ENCODE measurements at regions of chr7 and their contacts with region 1.

Region 1: GRCh38 chr7:25894902-25895791 is 256.9 kb upstream of the NFE2L3 start:
- DNase-seq: peak; percentile 89
- ATAC-seq: peak; percentile 83
- H3K4me3 ChIP-seq: peak overlapping the region in 3 of 5 experiments; percentile 12 to 27 (median 19)
- H3K4me3 Mint-ChIP-seq: peak overlapping the region; percentile 75
- H3K27ac ChIP-seq: no peak overlapping the region
- H3K27ac Mint-ChIP-seq: peak overlapping the region; percentile 52
- H3K4me1 ChIP-seq: peaks cover 29 to 33% of the 10 kb centered on the region in 2 donors
- H3K4me1 Mint-ChIP-seq: peaks cover 31% of the 10 kb centered on the region
- H3K27me3 ChIP-seq: peaks cover 0 to 56% (median 43%) of the 10 kb centered on the region in 4 experiments
- H3K27me3 Mint-ChIP-seq: peaks cover 63% of the 10 kb centered on the region
- CTCF ChIP-seq: peak; percentile 91

Region 2: DNA sequence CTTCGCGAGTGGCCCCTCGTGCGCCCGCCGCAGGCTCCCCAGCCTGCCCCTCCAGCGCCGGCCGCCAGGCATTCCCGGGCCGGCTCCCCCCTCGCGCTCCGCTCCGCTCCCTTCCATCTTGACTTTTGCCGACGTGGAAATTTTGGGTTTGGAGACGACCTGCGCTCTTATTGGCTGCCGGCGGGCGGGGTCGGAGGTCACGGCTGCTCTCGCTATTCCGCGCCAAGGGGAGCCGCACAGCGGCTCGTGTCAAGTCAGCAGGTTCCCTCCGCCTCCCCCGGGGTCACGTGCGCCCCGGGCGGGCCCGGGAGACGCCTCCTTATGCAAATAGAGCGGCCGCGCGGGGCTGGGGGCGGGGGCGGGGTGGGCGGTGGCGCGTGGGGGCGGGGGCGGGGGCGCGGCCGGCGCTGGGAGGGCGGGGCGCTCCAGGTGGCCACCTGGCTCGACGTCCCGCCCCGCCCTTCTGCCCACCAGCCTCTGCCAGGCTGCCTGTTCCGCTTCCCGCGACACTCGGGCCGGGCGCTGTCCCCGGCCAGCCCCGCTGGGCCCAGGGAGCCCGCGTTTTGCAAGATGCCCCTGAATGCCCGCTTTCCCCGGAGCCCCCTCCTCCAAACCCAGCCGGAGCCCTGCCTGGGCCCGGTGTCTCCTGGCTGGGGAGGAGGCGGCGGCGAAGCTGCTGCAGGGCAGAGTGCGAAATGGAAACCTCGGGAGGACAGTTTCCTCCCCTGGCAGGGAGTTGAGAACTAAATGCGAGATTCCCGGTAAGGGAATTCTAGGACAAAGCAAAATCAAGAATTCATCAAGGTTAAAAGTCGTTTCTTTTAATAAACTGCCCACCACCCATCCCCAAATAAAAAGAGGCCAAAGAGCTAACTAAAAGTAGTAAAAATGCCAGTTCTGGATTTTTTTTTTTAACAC is 56.1 kb after region 1 on chr7:
- CTCF ChIA-PET with region 1: interaction called, 5 read pairs
- POLR2A ChIA-PET with region 1: no interaction called
- intact Hi-C with region 1: loop called (anchors 2 kb)
- DNase-seq: peak; percentile 90
- ATAC-seq: peak; percentile 90
- H3K4me3 ChIP-seq: peak overlapping the region; percentile 15 to 69 (median 51)
- H3K4me3 Mint-ChIP-seq: peak overlapping the region; percentile 89
- H3K27ac ChIP-seq: no peak overlapping the region
- H3K27ac Mint-ChIP-seq: peak overlapping the region; percentile 78
- H3K4me1 ChIP-seq: peaks cover 32 to 33% of the 10 kb centered on the region in 2 donors
- H3K4me1 Mint-ChIP-seq: peaks cover 35% of the 10 kb centered on the region
- H3K27me3 ChIP-seq: peaks cover 0 to 38% (median 33%) of the 10 kb centered on the region in 4 experiments
- H3K27me3 Mint-ChIP-seq: peaks cover 30% of the 10 kb centered on the region
- CTCF ChIP-seq: no peak

Region 3: GRCh38 chr7:26078437-26079336 is 183.5 kb after region 1 on chr7:
- CTCF ChIA-PET with region 1: interaction called, 23 read pairs
- POLR2A ChIA-PET with region 1: no interaction called
- intact Hi-C with region 1: loop called (anchors 5 kb)
- DNase-seq: peak; percentile 88
- ATAC-seq: peak; percentile 100
- H3K4me3 ChIP-seq: no peak overlapping the region
- H3K4me3 Mint-ChIP-seq: peak overlapping the region; percentile 35
- H3K27ac ChIP-seq: no peak overlapping the region
- H3K27ac Mint-ChIP-seq: no peak overlapping the region
- H3K4me1 ChIP-seq: peaks cover 6 to 9% of the 10 kb centered on the region in 2 donors
- H3K4me1 Mint-ChIP-seq: peaks cover 9% of the 10 kb centered on the region
- H3K27me3 ChIP-seq: peaks cover 0 to 31% (median 14%) of the 10 kb centered on the region in 4 experiments
- H3K27me3 Mint-ChIP-seq: peaks cover 53% of the 10 kb centered on the region
- CTCF ChIP-seq: peak; percentile 71

Region 4: DNA sequence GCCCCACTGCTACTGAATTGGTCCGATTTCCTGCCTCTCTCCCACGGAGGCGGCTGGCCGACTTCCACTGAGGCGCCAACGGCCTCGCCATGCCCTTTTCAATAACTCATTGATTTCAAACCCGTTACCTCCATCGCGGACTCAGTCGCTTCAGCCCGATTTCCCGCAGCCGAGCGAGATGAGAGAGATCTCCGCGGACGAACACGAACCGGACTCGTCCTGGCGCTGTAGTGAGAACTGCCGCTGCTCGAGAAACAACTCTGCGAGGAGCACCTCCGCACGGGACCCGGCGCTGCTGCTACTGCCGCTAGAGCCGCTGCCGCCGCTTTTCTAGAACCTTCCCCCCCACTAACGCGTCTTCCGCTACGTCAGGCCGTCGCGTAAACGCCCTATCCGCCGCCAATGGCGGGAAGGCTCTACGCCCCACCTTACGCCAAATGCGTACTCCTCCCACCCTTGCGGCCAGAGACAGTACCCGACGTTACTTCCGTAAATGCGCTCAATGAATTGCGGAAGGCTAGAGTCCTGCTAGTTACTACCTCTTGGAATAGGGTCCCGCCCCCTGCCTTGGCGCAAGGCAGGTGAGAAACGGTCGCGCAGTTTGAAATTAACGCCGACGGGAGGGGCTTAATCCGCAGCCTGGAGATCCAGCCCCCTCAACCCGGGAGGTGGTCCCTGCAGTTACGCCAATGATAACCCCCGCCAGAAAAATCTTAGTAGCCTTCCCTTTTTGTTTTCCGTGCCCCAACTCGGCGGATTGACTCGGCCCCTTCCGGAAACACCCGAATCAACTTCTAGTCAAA is 305.5 kb after region 1 on chr7 and contains the start of gene HNRNPA2B1:
- CTCF ChIA-PET with region 1: interaction called, 62 read pairs
- POLR2A ChIA-PET with region 1: no interaction called
- intact Hi-C with region 1: loop called (anchors 2 kb)
- DNase-seq: peak; percentile 100
- ATAC-seq: peak; percentile 65
- H3K4me3 ChIP-seq: peak within 1 kb of the TSS; percentile 80 to 100 (median 100)
- H3K4me3 Mint-ChIP-seq: peak within 1 kb of the TSS; percentile 99
- H3K27ac ChIP-seq: peak within 1 kb of the TSS; percentile 97 to 99
- H3K27ac Mint-ChIP-seq: peak within 1 kb of the TSS; percentile 100
- H3K4me1 ChIP-seq: peaks cover 37 to 40% of the 10 kb centered on the region in 2 donors
- H3K4me1 Mint-ChIP-seq: peaks cover 53% of the 10 kb centered on the region
- H3K27me3 ChIP-seq: no peaks in the 10 kb centered on the region
- H3K27me3 Mint-ChIP-seq: no peaks in the 10 kb centered on the region
- CTCF ChIP-seq: no peak
- total RNA-seq, gene HNRNPA2B1: 524 and 536 TPM in 2 replicates

Region 5: DNA sequence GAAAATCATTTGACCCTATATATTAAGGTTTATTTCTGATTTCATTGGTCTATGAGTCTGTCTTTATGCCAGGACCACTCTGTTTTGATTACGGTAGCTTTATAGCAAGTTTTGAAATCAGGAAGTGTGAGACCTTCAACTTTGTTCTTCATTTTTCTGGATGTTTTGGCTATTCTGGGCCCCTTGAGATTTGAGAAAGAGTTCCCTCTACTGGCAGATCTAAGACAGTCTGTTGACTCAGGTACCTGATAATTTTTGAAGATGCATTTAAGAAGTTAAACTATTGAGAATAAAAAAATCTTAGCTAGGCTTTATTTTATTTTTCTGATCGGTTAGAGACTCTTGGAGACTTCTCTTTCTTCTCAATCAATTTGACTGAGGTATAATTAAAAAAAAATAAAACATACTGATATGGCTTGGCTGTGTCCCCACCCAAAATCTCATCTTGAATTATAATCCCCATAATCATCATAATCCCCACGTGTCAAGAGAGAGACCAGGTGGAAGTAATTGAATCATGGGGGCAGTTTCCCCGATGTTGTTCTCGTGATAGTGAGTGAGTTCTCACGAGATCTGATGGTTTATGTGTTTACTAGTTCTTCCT is 605.7 kb after region 1 on chr7:
- CTCF ChIA-PET with region 1: interaction called, 5 read pairs
- POLR2A ChIA-PET with region 1: no interaction called
- intact Hi-C with region 1: loop called (anchors 5 kb)
- DNase-seq: peak; percentile 70
- ATAC-seq: peak; percentile 70
- H3K4me3 ChIP-seq: no peak overlapping the region
- H3K4me3 Mint-ChIP-seq: no peak overlapping the region
- H3K27ac ChIP-seq: no peak overlapping the region
- H3K27ac Mint-ChIP-seq: no peak overlapping the region
- H3K4me1 ChIP-seq: no peaks in the 10 kb centered on the region
- H3K4me1 Mint-ChIP-seq: no peaks in the 10 kb centered on the region
- H3K27me3 ChIP-seq: peaks cover 0 to 6% (median 3%) of the 10 kb centered on the region in 4 experiments
- H3K27me3 Mint-ChIP-seq: peaks cover 33% of the 10 kb centered on the region
- CTCF ChIP-seq: peak; percentile 73

Region 6: DNA sequence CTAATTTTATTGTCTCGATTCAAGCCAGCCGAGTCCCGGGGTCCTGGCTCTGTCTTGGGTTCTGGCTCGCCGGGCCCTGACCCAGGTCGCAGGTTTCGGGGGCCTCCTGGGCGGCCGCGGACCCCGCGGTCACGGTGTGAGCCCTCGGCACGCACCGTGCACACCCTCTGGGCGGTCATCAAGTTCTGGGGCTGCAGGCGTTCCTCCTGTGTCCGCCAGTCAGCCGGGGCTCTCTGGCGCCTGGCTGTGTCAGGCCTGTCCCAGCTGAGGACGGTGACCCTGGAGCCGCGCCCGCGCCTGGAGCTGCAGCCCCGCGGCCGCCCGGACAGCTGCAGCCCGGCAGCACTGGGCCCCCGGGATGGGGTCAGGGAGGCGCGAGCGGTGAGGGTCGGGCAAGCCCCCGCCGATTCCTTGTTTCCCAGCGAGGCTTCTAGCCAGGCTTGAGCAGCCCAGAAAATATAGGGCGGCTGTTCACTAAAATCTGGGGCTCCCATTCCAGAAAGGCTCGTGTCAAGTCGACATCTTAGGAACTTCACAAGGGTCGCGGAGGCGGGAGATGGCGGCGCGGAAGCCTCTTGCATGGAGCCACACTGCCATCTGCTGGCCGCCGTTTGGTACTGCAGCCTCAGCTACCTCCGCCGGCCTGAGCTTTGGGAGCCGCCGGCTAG is 1265.5 kb after region 1 on chr7:
- CTCF ChIA-PET with region 1: interaction called, 50 read pairs
- POLR2A ChIA-PET with region 1: no interaction called
- intact Hi-C with region 1: no loop called
- DNase-seq: peak; percentile 91
- ATAC-seq: peak; percentile 84
- H3K4me3 ChIP-seq: peak overlapping the region; percentile 24 to 76 (median 62)
- H3K4me3 Mint-ChIP-seq: peak overlapping the region; percentile 86
- H3K27ac ChIP-seq: no peak overlapping the region
- H3K27ac Mint-ChIP-seq: peak overlapping the region; percentile 67
- H3K4me1 ChIP-seq: peaks cover 49 to 57% of the 10 kb centered on the region in 2 donors
- H3K4me1 Mint-ChIP-seq: peaks cover 38% of the 10 kb centered on the region
- H3K27me3 ChIP-seq: peaks cover 1 to 88% (median 75%) of the 10 kb centered on the region in 4 experiments
- H3K27me3 Mint-ChIP-seq: peaks cover 70% of the 10 kb centered on the region
- CTCF ChIP-seq: peak; percentile 100